CD4-positive, alpha-beta memory T cell (primary cell): ENCODE measurements at regions of chr2 and their contacts with region 1.

Region 1: DNA sequence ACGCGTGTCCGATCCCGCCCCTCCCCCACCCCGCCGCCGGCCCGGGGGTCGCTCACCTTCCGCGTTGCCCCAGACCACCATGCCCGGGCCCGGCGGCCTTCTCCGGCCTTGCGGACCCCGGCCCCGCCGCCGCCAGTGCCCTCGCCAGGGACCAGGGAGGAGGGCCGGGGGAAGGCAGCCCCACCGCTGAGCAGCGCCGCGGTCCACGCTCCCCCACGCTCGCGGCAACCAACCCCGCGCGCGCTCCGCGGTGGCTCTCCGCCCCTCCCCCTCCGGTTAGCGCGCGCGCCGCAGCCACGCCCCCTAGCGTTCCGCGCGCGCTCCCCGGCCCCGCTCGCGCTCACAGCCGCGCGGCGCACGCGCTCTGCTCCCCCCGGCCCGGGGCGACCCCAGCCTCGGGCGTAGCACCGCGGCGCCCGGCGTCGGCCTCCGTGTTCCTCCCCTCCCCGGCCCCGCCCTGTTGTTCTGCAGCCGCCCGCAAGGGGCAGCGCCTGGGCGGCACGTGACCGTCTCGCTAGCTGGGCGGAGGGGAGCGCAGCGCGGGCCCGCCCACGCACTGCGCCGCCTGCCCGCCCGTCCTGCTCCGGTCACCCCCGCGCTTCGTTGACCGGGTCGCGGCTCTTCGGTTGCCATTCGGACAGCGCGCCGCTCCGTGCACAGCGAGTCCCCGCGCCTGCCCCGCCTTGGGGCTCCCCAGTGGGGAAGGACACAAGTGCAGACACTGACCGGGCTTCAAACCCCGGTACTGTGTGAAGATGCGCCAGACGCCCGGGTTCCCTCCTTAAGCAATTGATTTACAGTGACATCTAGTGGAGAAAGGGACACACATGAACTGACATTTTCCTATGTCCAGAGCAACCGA is at the start of gene REV1:
- DNase-seq: peak; percentile 95 to 98 (median 96)
- H3K4me3 ChIP-seq: peak within 1 kb of the TSS; percentile 76 to 89
- H3K4me3 Mint-ChIP-seq: peak within 1 kb of the TSS; percentile 94 to 100 (median 98)
- H3K27ac ChIP-seq: peak within 1 kb of the TSS; percentile 69
- H3K27ac Mint-ChIP-seq: peak within 1 kb of the TSS; percentile 95 to 99 (median 98)
- H3K4me1 ChIP-seq: peaks cover 35% of the 10 kb centered on the region
- H3K4me1 Mint-ChIP-seq: peaks cover 24 to 43% (median 32%) of the 10 kb centered on the region in 4 donors
- H3K27me3 ChIP-seq: no peaks in the 10 kb centered on the region
- H3K27me3 Mint-ChIP-seq: peaks cover 3 to 5% of the 10 kb centered on the region in 2 donors
- total RNA-seq, gene REV1: 60.1 to 62.0 TPM

Region 2: DNA sequence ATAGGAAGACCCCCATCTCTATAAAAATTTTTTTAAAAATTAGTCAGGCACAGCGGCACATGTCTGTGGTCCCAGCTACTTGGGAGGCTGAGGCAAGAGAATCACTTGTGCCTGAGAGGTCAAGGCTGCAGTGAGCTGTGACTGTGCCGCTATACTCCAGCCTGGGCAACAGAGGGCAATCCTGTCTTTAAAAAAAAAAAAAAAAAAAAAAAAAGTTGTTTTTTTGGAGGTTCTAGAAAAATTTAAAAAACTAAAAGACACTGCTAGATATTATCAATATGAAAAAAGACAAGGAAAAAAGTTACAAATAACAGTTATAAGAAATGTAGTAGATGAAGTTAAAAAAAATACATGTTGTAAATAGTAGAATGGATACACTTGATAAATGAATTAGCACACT is 404.6 kb before region 1 on chr2:
- CTCF ChIA-PET with region 1: no interaction called
- POLR2A ChIA-PET with region 1: no interaction called
- intact Hi-C with region 1: loop called (anchors 5 kb)
- DNase-seq: peak in 3 of 5 donors; percentile 8 to 18 (median 14)
- H3K4me3 ChIP-seq: no peak overlapping the region
- H3K4me3 Mint-ChIP-seq: no peak overlapping the region
- H3K27ac ChIP-seq: no peak overlapping the region
- H3K27ac Mint-ChIP-seq: peak overlapping the region in 1 of 7 donors; percentile 39
- H3K4me1 ChIP-seq: peaks cover 8% of the 10 kb centered on the region
- H3K4me1 Mint-ChIP-seq: peaks cover 4 to 5% (median 5%) of the 10 kb centered on the region in 4 donors
- H3K27me3 ChIP-seq: no peaks in the 10 kb centered on the region
- H3K27me3 Mint-ChIP-seq: peaks cover 14 to 18% of the 10 kb centered on the region in 2 donors

Region 3: GRCh38 chr2:99141110-99142108 is 348.6 kb before region 1 on chr2 and contains the start of gene C2orf15:
- CTCF ChIA-PET with region 1: no interaction called
- POLR2A ChIA-PET with region 1: interaction called, 13 read pairs
- intact Hi-C with region 1: loop called (anchors 1 kb)
- DNase-seq: peak; percentile 97 to 98 (median 97)
- H3K4me3 ChIP-seq: peak within 1 kb of the TSS; percentile 50 to 97
- H3K4me3 Mint-ChIP-seq: peak within 1 kb of the TSS; percentile 93 to 99 (median 96)
- H3K27ac ChIP-seq: peak within 1 kb of the TSS; percentile 86
- H3K27ac Mint-ChIP-seq: peak within 1 kb of the TSS; percentile 96 to 99 (median 98)
- H3K4me1 ChIP-seq: peaks cover 18% of the 10 kb centered on the region
- H3K4me1 Mint-ChIP-seq: peaks cover 11 to 31% (median 17%) of the 10 kb centered on the region in 4 donors
- H3K27me3 ChIP-seq: no peaks in the 10 kb centered on the region
- H3K27me3 Mint-ChIP-seq: no peaks in the 10 kb centered on the region
- total RNA-seq, gene C2orf15: 2.3 to 3.2 TPM

Region 4: DNA sequence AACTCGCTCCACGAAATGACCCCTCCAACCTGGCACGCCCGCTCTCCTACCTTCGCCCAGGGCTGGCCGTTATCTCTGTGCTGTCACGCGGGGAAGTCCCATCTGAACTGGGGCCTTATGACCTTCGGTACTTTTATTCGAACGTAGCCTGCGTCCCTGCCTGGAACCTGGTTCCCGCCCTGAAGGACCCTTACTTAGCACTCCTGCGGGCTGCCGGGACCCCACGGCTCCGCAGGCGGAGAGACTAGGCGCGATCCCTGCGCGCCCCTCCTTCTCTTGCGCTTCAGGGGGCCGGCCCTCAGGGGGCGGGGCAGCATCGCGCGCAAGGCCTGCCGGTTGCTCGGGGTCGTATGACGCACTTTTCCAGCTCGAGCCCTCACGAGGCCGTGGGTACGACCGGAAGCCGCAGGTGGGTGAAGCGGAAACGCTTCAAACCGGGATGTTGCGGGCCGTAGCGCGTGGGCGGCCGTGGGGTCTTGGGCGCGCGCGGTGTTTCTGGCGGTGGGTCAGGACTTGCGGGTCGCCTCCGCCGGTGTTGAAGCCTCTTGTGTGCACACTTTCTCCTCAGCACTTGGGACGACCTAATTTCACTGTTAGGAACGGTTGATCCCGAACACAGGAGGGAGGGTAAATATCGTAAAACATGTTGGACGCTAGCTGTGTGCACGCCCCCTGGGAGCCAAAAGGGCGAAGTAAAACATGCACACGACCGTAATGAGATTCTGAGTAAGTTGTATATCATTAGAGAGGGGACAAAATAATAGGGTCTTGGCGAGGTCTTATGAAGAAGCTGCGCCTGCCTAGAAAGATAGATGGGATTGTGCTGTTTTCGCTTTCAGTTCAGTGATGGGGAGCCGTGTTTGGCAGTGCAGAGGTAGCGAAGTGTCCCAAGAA is 335.1 kb before region 1 on chr2 and contains the starts of genes LIPT1 and TSGA10:
- CTCF ChIA-PET with region 1: no interaction called
- POLR2A ChIA-PET with region 1: interaction called, 5 read pairs
- intact Hi-C with region 1: loop called (anchors 1 kb)
- DNase-seq: peak; percentile 90 to 92 (median 91)
- H3K4me3 ChIP-seq: peak within 1 kb of the TSS; percentile 78 to 89
- H3K4me3 Mint-ChIP-seq: peak within 1 kb of the TSS in 3 of 8 donors; percentile 91 to 99 (median 96)
- H3K27ac ChIP-seq: peak within 1 kb of the TSS; percentile 97
- H3K27ac Mint-ChIP-seq: peak within 1 kb of the TSS in 1 of 7 donors; percentile 100
- H3K4me1 ChIP-seq: peaks cover 25% of the 10 kb centered on the region
- H3K4me1 Mint-ChIP-seq: peaks cover 10 to 43% (median 39%) of the 10 kb centered on the region in 4 donors
- H3K27me3 ChIP-seq: no peaks in the 10 kb centered on the region
- H3K27me3 Mint-ChIP-seq: no peaks in the 10 kb centered on the region
- total RNA-seq, gene LIPT1: 23.4 to 24.4 TPM
- total RNA-seq, gene TSGA10: 20.7 to 22.6 TPM

Region 5: DNA sequence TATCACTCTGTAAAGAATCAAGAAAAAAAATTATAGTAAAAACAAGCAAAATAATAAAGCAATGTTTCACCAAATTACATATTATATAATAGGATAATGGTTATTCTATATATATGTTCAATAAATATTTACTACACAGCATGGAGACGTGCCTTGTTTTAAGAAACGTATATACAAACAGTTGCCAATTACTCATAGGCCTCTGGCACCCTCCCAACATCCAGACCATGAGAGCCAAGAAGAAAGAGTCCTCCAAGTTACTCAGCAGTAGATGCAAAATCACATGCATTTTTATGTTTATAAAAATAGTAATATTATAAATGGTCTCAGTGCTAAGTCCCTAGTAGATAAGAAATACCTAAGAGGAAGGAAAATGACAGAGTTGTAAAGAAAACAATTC is 65.0 kb before region 1 on chr2:
- CTCF ChIA-PET with region 1: interaction called, 3 read pairs
- POLR2A ChIA-PET with region 1: no interaction called
- intact Hi-C with region 1: loop called (anchors 5 kb)
- DNase-seq: no peak
- H3K4me3 ChIP-seq: no peak overlapping the region
- H3K4me3 Mint-ChIP-seq: no peak overlapping the region
- H3K27ac ChIP-seq: no peak overlapping the region
- H3K27ac Mint-ChIP-seq: no peak overlapping the region
- H3K4me1 ChIP-seq: no peaks in the 10 kb centered on the region
- H3K4me1 Mint-ChIP-seq: peaks cover 0 to 4% (median 0%) of the 10 kb centered on the region in 4 donors
- H3K27me3 ChIP-seq: no peaks in the 10 kb centered on the region
- H3K27me3 Mint-ChIP-seq: no peaks in the 10 kb centered on the region

Region 6: DNA sequence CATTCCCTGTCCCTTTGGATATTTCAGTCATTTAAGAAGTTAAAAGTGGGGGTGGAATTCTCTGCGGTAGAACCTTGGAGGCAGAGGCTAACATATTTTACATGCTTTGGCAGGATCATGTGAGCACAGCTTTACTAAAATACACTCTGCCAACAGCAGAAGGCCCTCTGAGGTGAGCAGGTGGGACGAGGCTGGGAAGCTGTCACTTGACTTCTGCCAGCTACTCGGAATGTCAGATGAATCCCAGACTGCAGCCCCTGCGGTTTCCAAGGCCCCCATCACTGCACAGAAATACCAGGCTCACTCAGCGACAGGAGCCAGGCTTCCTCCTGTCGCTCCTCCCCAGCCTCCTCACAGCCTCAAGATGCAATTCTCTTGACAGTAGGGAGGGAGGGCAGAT is 220.7 kb after region 1 on chr2:
- CTCF ChIA-PET with region 1: no interaction called
- POLR2A ChIA-PET with region 1: no interaction called
- intact Hi-C with region 1: no loop called
- DNase-seq: no peak
- H3K4me3 ChIP-seq: no peak overlapping the region
- H3K4me3 Mint-ChIP-seq: no peak overlapping the region
- H3K27ac ChIP-seq: no peak overlapping the region
- H3K27ac Mint-ChIP-seq: no peak overlapping the region
- H3K4me1 ChIP-seq: no peaks in the 10 kb centered on the region
- H3K4me1 Mint-ChIP-seq: no peaks in the 10 kb centered on the region
- H3K27me3 ChIP-seq: no peaks in the 10 kb centered on the region
- H3K27me3 Mint-ChIP-seq: peaks cover 1 to 3% of the 10 kb centered on the region in 2 donors